RWPE1 (cell line): ENCODE measurements at regions of chr20 and their contacts with region 1.

Region 1: GRCh38 chr20:45293041-45294002 is 13.3 kb upstream of the RBPJL start:
- DNase-seq: peak; percentile 96
- H3K27ac ChIP-seq: peak overlapping the region; percentile 57
- CTCF ChIP-seq: peak; percentile 100

Region 2: DNA sequence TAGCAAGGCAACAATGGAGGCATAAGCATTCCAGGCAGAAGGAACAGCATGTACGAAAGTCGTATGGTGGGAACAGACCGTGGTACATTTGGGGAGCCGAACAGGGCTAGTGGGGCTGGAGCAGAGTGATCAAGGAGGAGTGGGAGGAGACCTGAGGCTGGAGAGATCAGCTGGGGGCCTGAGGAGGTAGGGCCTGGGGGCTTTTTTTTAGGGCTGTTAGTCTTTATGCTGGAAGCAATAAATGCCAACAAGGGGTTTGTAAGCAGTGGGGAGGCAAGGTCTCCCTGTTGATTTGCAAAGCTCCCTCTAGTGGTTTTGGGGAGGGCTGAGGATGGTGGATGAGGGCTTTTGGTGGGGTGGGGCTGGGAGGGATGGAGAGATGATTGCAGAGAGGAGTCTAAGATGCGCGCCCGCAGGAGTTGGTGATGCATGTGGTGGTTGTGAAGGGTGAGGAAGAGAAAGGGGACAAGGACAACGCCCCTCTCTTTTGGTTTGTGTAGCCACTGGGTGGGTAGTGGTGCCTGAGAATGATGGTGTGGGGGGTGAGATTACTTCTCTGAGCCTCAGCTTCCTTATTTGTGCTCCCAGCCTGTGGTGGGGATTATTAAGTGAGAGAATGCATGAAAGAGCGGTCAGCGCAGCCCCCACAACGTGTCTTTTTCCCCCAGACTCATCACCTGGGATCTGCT is 1452.8 kb before region 1 on chr20:
- CTCF ChIA-PET with region 1: no interaction called
- POLR2A ChIA-PET with region 1: no interaction called
- DNase-seq: peak; percentile 94
- H3K27ac ChIP-seq: no peak overlapping the region
- CTCF ChIP-seq: no peak; the same call in 1 of the 2 replicates

Region 3: GRCh38 chr20:45011108-45011526 is 282.2 kb before region 1 on chr20:
- CTCF ChIA-PET with region 1: interaction called, 11 read pairs
- POLR2A ChIA-PET with region 1: no interaction called
- DNase-seq: peak; percentile 77
- H3K27ac ChIP-seq: no peak overlapping the region
- CTCF ChIP-seq: peak; percentile 95

Region 4: DNA sequence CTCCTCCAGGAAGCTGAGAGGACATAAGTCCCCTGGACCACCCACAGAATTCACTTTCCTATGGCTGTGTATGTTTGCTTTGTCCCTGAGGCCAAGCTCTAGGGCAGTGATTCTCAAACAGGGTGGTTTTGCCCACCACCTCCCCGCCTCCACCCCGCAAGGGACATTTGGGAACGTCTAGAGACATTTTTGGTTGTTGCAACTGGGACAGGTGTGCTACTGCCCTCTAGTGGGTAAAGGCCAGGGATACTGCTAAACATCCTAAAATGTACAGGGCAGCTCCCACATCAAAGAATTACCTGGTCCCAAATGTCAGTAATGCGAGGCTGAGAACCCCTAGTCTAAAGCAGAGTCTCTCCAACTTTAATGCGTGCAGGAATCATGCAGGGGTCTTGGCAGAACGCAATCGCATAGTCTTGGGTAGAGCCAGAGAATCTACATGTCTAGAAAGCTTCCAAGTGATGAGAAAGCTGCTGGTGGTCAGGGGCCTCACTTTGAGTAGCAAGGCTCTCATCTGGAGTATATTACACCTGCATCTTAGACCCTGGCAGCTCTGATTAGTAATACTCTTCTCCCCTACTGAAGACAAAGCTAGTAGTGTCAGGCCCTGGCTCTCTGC is 197.5 kb before region 1 on chr20:
- CTCF ChIA-PET with region 1: interaction called, 106 read pairs
- POLR2A ChIA-PET with region 1: no interaction called
- DNase-seq: peak; percentile 83
- H3K27ac ChIP-seq: no peak overlapping the region
- CTCF ChIP-seq: peak; percentile 98

Region 5: DNA sequence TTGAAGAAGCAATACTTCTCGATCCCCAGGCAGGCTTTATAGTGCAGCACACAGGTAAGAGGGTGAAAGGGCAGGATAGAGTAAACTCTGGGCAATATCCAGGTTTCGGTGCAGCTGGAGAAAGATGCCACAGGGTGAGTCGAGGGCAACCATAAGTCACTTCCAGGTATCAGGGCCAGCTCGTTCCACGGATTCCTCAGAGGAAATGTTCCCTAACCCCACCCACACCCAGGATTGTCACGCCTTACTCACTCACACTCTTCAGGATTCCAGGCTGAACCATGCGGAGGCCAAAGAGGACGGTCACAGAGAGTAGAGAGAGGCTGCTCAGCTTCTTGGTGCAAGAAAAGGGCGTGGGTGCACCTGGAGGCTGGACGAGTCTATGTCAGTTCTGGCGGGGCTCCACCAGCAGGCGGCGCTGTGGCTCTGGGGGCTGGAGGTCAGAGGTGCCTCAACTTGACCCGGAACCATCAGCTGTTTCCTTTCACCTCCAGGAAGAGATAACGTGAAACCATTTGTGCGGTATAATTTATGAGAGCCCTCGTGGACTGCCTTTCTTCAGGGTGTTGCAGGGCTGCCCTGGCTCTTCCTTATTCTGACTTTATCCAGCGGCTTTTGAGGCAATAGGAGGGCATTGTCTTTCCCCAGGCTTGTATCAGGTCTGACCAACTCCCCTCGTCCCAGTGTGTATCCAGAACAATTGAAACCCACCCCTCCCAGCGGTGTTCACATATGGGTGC is 154.6 kb before region 1 on chr20:
- CTCF ChIA-PET with region 1: interaction called, 109 read pairs
- POLR2A ChIA-PET with region 1: no interaction called
- DNase-seq: peak; percentile 80
- H3K27ac ChIP-seq: no peak overlapping the region
- CTCF ChIP-seq: peak; percentile 88

Region 6: GRCh38 chr20:45254869-45255266 is 38.5 kb before region 1 on chr20:
- CTCF ChIA-PET with region 1: interaction called, 17 read pairs
- POLR2A ChIA-PET with region 1: interaction called, 3 read pairs
- DNase-seq: peak; percentile 85
- H3K27ac ChIP-seq: peak overlapping the region; percentile 95
- CTCF ChIP-seq: no peak

Region 7: GRCh38 chr20:45311589-45312211 is 18.4 kb after region 1 on chr20:
- CTCF ChIA-PET with region 1: interaction called, 33 read pairs
- POLR2A ChIA-PET with region 1: no interaction called
- DNase-seq: peak; percentile 79
- H3K27ac ChIP-seq: no peak overlapping the region
- CTCF ChIP-seq: peak; percentile 98